ENCODE measurements at regions of chr19 and their contacts with region 1.

Region 1: DNA sequence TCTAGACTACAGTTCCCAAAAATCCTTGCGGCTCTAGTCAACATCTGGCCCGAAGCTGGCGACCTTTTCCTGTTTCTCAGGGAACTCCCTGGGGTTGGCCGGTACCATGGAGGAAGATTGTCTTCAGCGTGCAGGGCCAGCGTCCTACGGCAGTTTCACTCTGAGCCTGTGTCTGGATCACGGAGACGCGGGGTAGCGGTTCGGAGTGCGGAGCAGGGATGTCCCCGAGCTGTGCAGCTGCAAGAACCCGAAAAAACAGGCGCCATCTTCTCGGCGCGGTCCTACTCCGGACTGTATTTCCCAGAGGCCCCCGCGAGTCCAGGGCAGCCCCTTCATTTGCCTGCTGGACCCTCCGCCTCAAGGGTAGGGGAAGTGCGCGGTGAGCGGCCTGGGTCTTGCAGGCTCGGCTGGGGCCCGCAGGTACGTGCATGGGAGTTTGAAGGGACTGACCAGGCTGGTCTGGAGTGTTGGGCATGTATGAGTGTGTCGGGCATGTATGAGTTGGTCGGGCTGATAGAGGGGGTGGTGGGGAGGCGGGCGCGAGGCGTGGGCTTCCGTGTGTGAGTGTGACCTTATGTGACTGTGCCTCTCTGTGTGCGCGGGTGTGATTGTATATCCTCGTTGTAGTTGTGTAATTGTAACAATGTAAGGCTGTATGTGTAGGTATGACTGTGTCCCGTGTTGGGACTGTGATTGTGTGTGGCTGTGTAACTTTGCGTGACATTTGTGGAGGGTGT is at the start of gene ZNF383:
- DNase-seq: peak; percentile 94
- H3K4me3 ChIP-seq: peak within 1 kb of the TSS; percentile 91
- H3K27ac ChIP-seq: peak within 1 kb of the TSS; percentile 76
- H3K4me1 ChIP-seq: peaks cover 5% of the 10 kb centered on the region
- CTCF ChIP-seq: no peak
- total RNA-seq, gene ZNF383: 10.6 and 11.4 TPM in 2 replicates

Region 2: GRCh38 chr19:36214386-36215275 is 1003.4 kb before region 1 on chr19 and contains the starts of genes ZNF146 and ZNF565:
- CTCF ChIA-PET with region 1: no interaction called
- POLR2A ChIA-PET with region 1: interaction called, 4 read pairs
- intact Hi-C with region 1: loop called (anchors 10 kb)
- DNase-seq: peak; percentile 100
- H3K4me3 ChIP-seq: peak within 1 kb of the TSS; percentile 76
- H3K27ac ChIP-seq: peak within 1 kb of the TSS; percentile 71
- H3K4me1 ChIP-seq: peaks cover 21% of the 10 kb centered on the region
- CTCF ChIP-seq: no peak
- total RNA-seq, gene ZNF146: 67.4 and 69.4 TPM in 2 replicates
- total RNA-seq, gene ZNF565: 2.1 and 2.8 TPM in 2 replicates

Region 3: GRCh38 chr19:36635342-36635741 is 582.7 kb before region 1 on chr19:
- CTCF ChIA-PET with region 1: no interaction called
- POLR2A ChIA-PET with region 1: no interaction called
- intact Hi-C with region 1: no loop called
- DNase-seq: no peak
- H3K4me3 ChIP-seq: no peak overlapping the region
- H3K27ac ChIP-seq: no peak overlapping the region
- H3K4me1 ChIP-seq: no peaks in the 10 kb centered on the region
- CTCF ChIP-seq: no peak

Region 4: GRCh38 chr19:36687214-36688056 is 530.6 kb before region 1 on chr19 and contains the start of gene ZNF567:
- CTCF ChIA-PET with region 1: no interaction called
- POLR2A ChIA-PET with region 1: no interaction called
- intact Hi-C with region 1: loop called (anchors 10 kb)
- DNase-seq: peak; percentile 98
- H3K4me3 ChIP-seq: peak within 1 kb of the TSS; percentile 80
- H3K27ac ChIP-seq: peak within 1 kb of the TSS; percentile 32
- H3K4me1 ChIP-seq: peaks cover 12% of the 10 kb centered on the region
- CTCF ChIP-seq: no peak
- total RNA-seq, gene ZNF567: 8.3 and 8.4 TPM in 2 replicates

Region 5: DNA sequence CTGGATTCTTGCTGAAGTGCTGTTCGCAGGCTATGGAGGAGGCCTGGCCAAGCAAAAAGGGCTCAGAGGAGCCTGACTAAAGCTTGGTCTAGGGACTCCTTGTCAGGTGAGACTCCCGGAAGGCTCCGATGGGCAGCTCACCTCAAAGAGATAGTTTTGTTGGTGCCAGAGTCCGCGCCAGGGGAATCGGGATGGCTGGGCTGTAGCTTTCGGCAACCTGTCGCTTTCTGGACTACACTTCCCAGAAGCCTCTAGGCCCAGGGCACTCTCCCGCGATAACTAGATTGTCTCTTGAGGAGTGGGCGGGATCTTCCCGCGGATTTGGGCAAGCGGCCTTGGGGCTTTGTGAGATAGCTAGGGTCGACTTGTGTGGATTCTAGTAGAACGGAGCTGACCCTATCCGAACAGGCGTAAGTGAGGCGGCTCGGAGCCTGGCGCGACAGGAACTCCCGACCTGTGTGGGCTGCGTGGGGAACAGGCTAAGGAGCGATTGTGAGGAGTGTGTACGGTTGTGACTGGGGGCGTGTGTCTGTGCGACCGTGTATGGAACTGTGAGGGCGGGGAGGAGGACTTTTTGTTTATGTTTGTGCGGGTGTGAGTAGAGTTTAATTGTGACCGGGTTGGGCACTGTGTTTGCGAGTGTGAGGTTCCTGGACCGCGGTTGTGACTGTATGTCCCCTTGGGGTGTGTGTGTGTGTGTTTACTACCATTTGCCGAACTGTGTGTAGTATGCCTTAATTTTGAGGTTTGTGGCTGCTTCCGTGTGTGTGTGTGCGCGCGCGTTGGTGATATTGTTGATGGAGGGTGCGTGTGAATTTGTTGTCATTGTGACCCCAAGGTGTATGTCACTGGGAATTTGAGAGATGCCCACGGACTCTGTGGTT is 367.2 kb before region 1 on chr19 and contains the start of gene ZNF345:
- CTCF ChIA-PET with region 1: no interaction called
- POLR2A ChIA-PET with region 1: no interaction called
- intact Hi-C with region 1: loop called (anchors 5 kb)
- DNase-seq: peak; percentile 87
- H3K4me3 ChIP-seq: peak within 1 kb of the TSS; percentile 73
- H3K27ac ChIP-seq: peak within 1 kb of the TSS; percentile 32
- H3K4me1 ChIP-seq: no peaks in the 10 kb centered on the region
- CTCF ChIP-seq: no peak
- total RNA-seq, gene ZNF345: 1.1 and 3.3 TPM in 2 replicates

Region 6: GRCh38 chr19:37077934-37078725 is 139.9 kb before region 1 on chr19 and contains the start of gene ZNF420:
- CTCF ChIA-PET with region 1: no interaction called
- POLR2A ChIA-PET with region 1: interaction called, 5 read pairs
- intact Hi-C with region 1: loop called (anchors 2 kb)
- DNase-seq: peak; percentile 98
- H3K4me3 ChIP-seq: peak within 1 kb of the TSS; percentile 88
- H3K27ac ChIP-seq: peak within 1 kb of the TSS; percentile 46
- H3K4me1 ChIP-seq: peaks cover 13% of the 10 kb centered on the region
- CTCF ChIP-seq: no peak
- total RNA-seq, gene ZNF420: 8.8 and 14.0 TPM in 2 replicates

Region 7: DNA sequence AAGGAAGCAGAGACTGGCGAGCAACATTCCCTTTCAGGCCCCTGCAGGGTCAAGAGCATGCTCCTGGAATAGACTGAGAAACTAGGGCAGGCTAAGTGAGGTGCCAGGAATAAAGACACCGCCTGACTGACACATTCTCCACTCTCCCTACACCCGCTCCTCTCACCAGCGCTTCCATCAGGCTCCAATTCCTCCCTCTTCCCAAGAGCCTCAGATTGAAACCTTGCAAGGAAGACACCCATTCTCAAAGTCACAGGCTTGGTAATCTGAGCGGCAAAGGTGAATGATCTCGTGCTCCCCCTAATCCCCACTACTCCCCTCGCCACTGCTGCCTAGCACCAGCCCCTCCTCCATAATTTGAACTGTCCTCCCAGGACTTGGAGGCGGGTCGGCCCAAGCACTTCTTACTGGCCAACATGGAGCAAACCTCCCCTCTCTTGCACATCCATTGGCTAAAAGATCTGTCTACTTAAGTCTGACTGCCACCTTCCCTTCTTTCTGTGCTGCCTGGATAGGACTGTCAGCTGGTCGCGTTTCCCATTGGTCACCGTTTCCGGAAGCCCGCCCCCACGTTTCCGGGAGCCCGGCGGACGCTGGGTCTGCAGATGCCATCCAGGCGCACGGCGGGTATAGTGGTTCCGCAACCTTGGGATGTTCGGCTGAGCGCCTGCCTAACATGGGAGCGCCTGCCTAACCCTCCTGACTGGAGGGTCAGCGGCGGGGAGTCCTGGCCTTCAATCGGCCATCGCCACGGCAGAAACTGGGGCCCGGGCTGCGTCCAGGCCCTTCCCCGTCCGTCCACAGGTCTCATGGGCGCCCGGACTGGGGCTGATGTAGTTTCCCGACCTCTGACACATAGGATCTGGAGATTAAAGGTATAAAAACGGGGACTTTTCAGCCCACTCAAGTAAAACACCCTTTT is 33.5 kb after region 1 on chr19:
- CTCF ChIA-PET with region 1: no interaction called
- POLR2A ChIA-PET with region 1: no interaction called
- intact Hi-C with region 1: no loop called
- DNase-seq: no peak
- H3K4me3 ChIP-seq: no peak overlapping the region
- H3K27ac ChIP-seq: no peak overlapping the region
- H3K4me1 ChIP-seq: no peaks in the 10 kb centered on the region
- CTCF ChIP-seq: no peak

Region 8: GRCh38 chr19:37362733-37363132 is 144.7 kb after region 1 on chr19:
- CTCF ChIA-PET with region 1: no interaction called
- POLR2A ChIA-PET with region 1: no interaction called
- intact Hi-C with region 1: no loop called
- DNase-seq: peak; percentile 37
- H3K4me3 ChIP-seq: no peak overlapping the region
- H3K27ac ChIP-seq: no peak overlapping the region
- H3K4me1 ChIP-seq: no peaks in the 10 kb centered on the region
- CTCF ChIP-seq: peak; percentile 58

Region 9: DNA sequence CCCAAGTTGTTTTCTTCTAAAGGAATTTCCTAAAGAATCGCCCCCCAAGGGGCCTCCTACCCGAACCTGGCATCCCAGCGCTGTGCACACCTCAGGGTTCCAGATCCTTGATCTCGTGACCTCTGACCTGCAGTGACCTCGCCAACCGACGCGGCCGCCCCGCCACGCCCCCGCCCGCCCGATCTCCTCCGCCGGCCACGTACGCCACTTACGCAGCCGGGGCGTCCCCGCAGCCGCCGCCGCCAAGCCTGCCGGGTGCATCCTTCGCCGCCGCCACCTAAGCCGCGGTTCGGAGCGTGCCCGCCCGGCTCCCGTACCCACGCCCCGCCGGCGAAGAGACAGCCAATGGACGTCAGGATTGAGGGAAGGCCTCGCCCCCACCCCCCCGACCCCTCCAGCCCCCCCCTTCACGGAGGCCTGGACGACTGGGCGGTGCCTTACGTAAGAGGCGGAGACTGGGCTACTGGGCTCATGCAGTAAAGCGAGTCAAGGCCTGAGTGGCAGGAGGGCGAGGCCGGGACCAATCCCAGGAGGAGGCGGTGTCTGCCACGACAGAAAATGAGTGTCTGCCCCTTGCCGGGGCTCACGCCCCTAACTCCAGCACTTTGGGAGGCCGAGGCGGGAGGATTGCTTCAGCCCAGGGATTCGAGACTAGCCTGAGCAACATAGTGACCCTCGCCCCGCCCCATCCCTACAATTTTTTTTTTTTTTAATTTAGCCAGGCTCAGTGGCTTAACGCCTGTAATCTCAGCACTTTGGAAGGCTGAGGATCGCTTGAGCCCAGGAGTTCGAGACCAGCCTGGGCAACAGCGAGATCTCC is 1097.8 kb after region 1 on chr19 and contains the start of gene YIF1B:
- CTCF ChIA-PET with region 1: no interaction called
- POLR2A ChIA-PET with region 1: no interaction called
- intact Hi-C with region 1: loop called (anchors 10 kb)
- DNase-seq: peak; percentile 98
- H3K4me3 ChIP-seq: peak within 1 kb of the TSS; percentile 94
- H3K27ac ChIP-seq: peak within 1 kb of the TSS; percentile 78
- H3K4me1 ChIP-seq: peaks cover 22% of the 10 kb centered on the region
- CTCF ChIP-seq: no peak
- total RNA-seq, gene YIF1B: 44.3 and 68.3 TPM in 2 replicates